Activated B cell treated with CpG ODN at 0.5 μM for 24 hours (primary cell): ENCODE measurements at regions of chr1 and their contacts with region 1.

Region 1: GRCh38 chr1:35451125-35451528 is 106.1 kb downstream of the KIAA0319L start:
- DNase-seq: peak; percentile 48
- ATAC-seq: peak; percentile 87
- H3K4me3 Mint-ChIP-seq: no peak overlapping the region
- H3K27ac Mint-ChIP-seq: no peak overlapping the region
- H3K4me1 Mint-ChIP-seq: no peaks in the 10 kb centered on the region
- H3K27me3 Mint-ChIP-seq: no peaks in the 10 kb centered on the region
- CTCF ChIP-seq: no peak

Region 2: DNA sequence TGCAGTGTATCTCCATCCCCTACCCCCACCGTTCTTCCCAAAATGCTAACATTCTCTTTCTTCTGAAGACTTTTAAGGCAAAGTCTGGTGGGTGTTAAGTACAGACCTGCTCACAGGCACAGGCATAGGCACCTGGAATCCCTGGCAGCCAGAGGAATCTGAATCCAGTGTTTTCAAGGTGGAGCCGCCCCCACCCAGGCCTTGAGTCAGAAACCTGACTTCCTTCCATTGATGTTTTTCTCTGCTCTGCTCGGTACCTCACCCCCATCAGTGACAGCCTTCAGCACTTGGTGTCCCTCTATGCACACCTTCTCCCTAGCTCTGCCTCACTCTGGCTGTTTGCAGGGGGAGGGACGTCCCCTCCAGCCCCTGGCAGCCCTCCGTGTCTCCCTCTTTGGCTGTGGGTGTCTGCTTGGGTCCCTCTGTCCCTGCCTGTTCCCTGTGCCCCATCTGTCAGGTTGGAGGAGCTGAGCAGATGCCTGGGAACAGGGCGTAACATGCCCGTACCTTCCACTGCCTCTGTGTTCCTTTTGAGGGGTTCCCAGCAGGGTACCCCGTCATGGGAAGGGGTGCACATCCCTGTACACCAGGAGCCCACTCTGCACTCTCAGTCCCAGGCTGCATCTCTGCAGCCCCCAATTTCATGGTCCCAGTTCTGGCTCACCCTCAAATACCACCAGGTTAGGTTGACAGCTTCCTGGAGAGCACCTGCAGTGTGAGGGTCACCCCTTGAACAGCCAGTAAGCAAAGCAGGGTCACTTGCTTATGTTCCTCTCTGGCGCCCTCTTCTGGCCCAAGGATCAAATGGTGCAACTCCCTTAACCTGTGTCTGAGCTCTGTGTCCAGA is 113.1 kb after region 1 on chr1:
- CTCF ChIA-PET with region 1: interaction called, 101 read pairs
- POLR2A ChIA-PET with region 1: interaction called, 3 read pairs
- intact Hi-C with region 1: loop called (anchors 1 kb)
- DNase-seq: peak; percentile 60
- ATAC-seq: peak; percentile 82
- H3K4me3 Mint-ChIP-seq: no peak overlapping the region
- H3K27ac Mint-ChIP-seq: no peak overlapping the region
- H3K4me1 Mint-ChIP-seq: peaks cover 4% of the 10 kb centered on the region
- H3K27me3 Mint-ChIP-seq: no peaks in the 10 kb centered on the region
- CTCF ChIP-seq: peak; percentile 55